Vagina (tissue), 2 donors: ENCODE measurements at regions of chr5 and their contacts with region 1.

Region 1: DNA sequence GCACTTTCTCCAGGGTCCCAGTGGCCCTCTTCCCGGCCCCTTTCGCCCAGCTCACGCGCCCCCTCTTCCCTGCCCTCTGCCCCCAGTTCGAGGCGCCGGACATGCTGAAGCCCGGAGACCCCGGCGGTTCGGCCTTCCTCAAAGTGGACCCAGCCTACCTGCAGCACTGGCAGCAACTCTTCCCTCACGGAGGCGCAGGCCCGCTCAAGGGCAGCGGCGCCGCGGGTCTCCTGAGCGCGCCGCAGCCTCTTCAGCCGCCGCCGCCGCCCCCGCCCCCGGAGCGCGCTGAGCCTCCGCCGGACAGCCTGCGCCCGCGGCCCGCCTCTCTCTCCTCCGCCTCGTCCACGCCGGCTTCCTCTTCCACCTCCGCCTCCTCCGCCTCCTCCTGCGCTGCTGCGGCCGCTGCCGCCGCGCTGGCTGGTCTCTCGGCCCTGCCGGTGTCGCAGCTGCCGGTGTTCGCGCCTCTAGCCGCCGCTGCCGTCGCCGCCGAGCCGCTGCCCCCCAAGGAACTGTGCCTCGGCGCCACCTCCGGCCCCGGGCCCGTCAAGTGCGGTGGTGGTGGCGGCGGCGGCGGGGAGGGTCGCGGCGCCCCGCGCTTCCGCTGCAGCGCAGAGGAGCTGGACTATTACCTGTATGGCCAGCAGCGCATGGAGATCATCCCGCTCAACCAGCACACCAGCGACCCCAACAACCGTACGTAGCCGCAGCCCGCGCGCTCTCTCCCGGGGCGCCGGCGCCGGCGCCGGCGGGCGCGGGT is 1.1 kb downstream of the PRDM6 start:
- DNase-seq: no peak
- H3K4me3 ChIP-seq: peak overlapping the region; percentile 45 to 68
- H3K27ac ChIP-seq: no peak overlapping the region
- H3K4me1 ChIP-seq: peaks cover 37% of the 10 kb centered on the region
- H3K27me3 ChIP-seq: peaks cover 36% of the 10 kb centered on the region
- CTCF ChIP-seq: no peak
- POLR2A ChIP-seq: no peak

Region 2: DNA sequence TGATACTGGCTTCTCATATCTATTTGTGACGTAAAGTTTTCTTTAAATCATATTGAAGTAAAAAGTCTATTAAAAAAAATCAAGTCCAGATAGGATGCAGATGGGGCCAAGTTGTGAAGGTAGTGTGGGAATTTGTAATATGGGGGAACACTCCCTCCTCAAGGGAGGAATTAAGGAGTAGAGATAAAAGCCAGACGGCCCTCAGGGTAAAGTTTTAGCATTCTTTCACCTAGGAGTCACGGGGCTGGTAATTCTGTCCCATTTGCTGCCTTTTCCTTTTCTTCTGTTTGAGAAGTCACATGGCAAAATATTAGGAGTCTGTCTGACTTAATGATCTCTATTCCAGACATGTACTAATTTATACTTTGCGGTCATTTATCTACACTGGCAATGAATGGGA is 182.9 kb before region 1 on chr5:
- intact Hi-C with region 1: no loop called
- DNase-seq: no peak
- H3K4me3 ChIP-seq: no peak overlapping the region
- H3K27ac ChIP-seq: no peak overlapping the region
- H3K4me1 ChIP-seq: peaks cover 5% of the 10 kb centered on the region
- H3K27me3 ChIP-seq: no peaks in the 10 kb centered on the region
- CTCF ChIP-seq: no peak
- POLR2A ChIP-seq: no peak

Region 3: GRCh38 chr5:123036391-123037103 is 53.5 kb before region 1 on chr5 and contains the start of gene PPIC:
- intact Hi-C with region 1: loop called (anchors 5 kb)
- DNase-seq: no peak
- H3K4me3 ChIP-seq: peak within 1 kb of the TSS; percentile 68 to 69
- H3K27ac ChIP-seq: peak within 1 kb of the TSS; percentile 75
- H3K4me1 ChIP-seq: peaks cover 9% of the 10 kb centered on the region
- H3K27me3 ChIP-seq: no peaks in the 10 kb centered on the region
- CTCF ChIP-seq: no peak
- POLR2A ChIP-seq: no peak
- total RNA-seq, gene PPIC: 21.6 TPM

Region 4: GRCh38 chr5:123066016-123066415 is 24.1 kb before region 1 on chr5:
- intact Hi-C with region 1: no loop called
- DNase-seq: no peak
- H3K4me3 ChIP-seq: no peak overlapping the region
- H3K27ac ChIP-seq: no peak overlapping the region
- H3K4me1 ChIP-seq: no peaks in the 10 kb centered on the region
- H3K27me3 ChIP-seq: no peaks in the 10 kb centered on the region
- CTCF ChIP-seq: no peak
- POLR2A ChIP-seq: no peak

Region 5: DNA sequence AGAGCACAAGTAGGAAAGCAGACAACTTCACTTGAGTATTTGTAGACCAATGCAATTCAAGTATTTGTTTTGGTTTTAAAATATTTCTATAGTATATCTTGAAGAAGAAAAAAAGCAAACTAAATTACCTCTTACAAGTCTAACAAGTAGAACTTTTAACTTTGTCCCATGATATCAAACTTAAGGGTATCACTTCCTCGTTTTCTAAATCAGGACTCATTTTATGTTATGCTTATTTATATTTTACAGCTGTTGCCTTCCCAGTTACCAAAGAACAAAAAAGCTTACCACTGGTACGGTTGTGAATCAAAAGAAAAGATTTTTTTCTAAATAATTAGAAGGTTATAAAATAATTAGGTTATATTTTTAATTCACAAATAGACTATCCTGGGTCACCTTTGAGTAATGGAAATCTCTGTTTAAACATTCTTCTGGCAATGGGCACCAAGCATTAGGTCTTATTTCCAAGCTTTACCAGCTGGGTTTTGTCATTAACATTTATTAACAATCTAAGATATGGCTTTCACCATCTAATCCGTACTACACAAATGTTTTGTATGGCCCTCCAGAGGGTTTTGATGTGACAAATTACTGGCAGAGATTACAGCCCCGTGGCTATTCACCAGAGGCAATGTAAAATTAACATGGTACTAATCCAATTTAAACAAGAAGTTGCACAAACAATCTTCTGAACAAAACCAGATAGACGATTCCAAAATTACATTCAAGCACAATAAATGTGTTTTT is 269.5 kb after region 1 on chr5:
- intact Hi-C with region 1: loop called (anchors 10 kb)
- DNase-seq: no peak
- H3K4me3 ChIP-seq: no peak overlapping the region
- H3K27ac ChIP-seq: no peak overlapping the region
- H3K4me1 ChIP-seq: no peaks in the 10 kb centered on the region
- H3K27me3 ChIP-seq: no peaks in the 10 kb centered on the region
- CTCF ChIP-seq: no peak
- POLR2A ChIP-seq: no peak